ENCODE measurements at regions of chr3 and their contacts with region 1.

Region 1: DNA sequence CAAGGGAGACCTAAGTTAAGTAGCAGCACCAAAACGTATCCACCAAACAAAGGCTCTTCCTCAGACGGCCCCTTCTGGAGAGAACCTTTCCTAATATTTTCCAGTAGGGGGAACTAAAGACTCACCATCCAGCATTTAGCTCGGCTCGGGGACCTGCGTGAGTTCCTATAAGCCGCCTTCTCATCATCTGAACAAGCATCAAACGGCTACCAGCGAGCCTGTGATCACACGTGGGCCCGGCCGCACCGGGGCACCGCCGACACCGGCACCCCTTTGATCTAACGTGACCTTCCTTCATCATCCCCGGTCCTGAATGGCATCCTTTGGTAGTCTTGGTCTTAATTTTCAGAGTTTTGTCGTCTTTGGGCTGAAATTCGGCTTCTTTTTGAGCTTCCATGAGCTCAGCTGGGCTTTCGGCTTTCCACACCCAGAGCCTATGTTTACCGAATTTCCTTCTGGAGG is 1.4 kb upstream of the ROBO2 start:
- ATAC-seq: peak; percentile 61 to 76 (median 71)
- H3K4me3 ChIP-seq: peak overlapping the region; percentile 51 to 83 (median 66)
- H3K27ac ChIP-seq: peak overlapping the region in 1 of 2 donors; percentile 61
- H3K4me1 ChIP-seq: peaks cover 7 to 11% of the 10 kb centered on the region in 2 donors

Region 2: DNA sequence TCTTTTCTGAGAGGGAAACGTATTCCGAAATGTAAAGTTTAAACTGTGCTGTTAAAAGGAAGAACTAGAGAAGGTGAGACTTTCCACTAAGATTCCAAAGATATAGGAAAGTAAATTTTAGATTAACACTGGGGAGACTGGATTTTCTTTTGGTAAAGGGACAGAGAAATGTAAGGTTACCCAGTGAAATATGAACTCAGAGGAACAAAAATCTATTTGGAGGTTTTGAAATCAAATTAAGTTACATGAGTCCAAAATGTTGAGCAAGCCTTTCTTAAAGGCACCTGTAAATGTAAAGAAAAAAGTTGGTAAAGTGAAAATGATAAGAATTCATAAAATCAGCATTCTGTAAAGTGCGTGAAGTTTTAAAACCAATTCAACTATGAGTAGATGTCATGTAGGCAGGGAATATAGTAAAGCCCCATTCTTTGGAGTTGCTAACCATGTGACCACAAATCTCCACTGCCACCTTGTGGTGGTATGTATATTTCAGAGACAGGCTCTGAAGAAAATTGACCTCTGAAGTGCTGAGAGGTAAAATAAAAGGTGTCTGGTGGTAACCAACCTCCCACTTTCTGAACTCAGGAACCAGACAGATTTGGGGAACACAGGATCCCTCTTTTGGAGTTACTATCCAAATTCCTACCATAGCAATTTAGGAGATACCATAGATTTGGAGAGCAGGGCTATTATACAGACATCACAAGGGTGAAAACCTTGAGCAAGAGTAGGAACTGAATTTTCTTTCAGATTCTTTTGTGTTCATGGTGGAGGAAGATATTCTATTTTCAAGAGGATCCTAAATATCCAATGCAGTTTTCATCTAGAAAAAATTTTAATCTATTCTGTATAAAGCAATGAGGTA is 216.7 kb after region 1 on chr3:
- in situ Hi-C with region 1: loop called in 5 of 9 experiments (anchors 25 kb)
- ATAC-seq: peak in 6 of 8 experiments; percentile 51 to 74 (median 63)
- H3K4me3 ChIP-seq: no peak overlapping the region
- H3K27ac ChIP-seq: no peak overlapping the region
- H3K4me1 ChIP-seq: peaks cover 4 to 16% of the 10 kb centered on the region in 2 donors

Region 3: DNA sequence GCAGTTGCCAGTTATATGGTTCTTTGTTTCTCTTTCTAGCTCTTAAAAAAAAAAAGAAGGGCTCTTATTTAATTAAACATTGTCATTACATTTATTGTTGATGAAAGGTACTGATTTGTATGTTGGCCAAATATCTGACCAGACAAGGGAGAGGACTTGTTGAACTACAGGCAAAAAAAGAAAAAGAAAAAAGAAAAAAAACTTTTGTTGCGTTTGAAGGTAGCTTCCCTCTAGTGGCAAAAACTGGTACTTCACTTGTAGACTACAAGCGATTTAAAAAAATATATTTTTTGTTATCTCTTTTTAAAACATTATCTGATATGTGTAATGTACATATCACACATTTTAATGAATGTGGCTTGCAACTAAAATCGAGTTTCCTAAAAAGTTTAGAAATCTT is 282.0 kb after region 1 on chr3:
- in situ Hi-C with region 1: loop called in 1 of 9 experiments (anchors 25 kb)
- ATAC-seq: no peak
- H3K4me3 ChIP-seq: no peak overlapping the region
- H3K27ac ChIP-seq: no peak overlapping the region
- H3K4me1 ChIP-seq: no peaks in the 10 kb centered on the region

Region 4: DNA sequence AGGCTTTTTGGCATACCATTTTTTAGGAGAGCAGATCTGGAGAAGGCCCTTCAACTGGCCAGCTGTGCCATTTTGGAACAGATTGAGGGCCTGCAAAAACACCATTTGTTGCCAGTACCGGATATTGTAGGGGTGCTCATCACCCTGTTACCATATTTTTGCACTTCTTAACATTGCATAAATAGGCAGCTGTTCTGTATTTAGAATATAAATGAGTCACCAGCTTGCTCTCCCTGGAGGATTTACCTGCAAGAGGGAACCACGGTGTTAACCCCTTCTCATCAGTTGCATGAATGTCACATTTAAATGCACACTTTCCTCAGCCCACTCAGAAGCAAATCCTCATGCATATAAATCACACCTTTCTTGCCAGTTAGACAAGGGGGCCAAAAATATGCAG is 437.0 kb after region 1 on chr3:
- in situ Hi-C with region 1: no loop called
- ATAC-seq: peak in 3 of 8 experiments; percentile 21 to 50 (median 39)
- H3K4me3 ChIP-seq: no peak overlapping the region
- H3K27ac ChIP-seq: no peak overlapping the region
- H3K4me1 ChIP-seq: peaks cover 8 to 13% of the 10 kb centered on the region in 2 donors

Region 5: DNA sequence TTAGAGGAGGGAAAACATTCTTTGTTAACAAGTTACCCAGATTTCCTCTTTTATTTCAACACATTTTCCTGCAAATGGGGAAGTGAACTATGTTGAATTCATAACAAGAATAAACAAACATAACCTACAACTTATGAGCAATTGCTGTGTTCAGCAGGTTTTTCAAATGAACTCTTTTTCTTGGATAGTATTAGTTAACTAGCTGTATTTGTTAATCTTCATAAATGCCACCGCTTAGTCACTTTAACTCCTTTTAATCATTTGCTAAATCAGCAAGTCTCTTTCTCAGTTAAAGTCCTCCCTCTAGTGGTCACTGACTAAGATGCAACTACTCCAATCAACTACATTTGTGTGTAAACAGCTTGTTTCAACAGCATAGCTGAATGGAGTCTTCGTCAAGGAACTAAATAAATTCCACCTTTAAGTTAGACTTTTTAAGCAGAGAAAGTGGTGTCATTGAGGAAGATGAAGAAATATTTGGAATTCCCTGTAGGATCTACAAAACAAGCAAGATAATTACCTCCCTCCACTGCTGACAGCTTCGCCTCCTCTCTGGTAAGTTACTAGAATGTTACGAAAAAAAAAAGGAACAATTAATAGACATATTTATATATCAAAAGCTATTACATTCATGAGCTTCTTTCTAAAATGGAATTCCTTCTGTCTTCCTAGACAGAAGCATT is 1607.3 kb after region 1 on chr3:
- in situ Hi-C with region 1: loop called in 2 of 9 experiments (anchors 25 kb)
- ATAC-seq: peak; percentile 38 to 60 (median 54)
- H3K4me3 ChIP-seq: no peak overlapping the region
- H3K27ac ChIP-seq: no peak overlapping the region
- H3K4me1 ChIP-seq: peaks cover 15 to 37% of the 10 kb centered on the region in 2 donors

Region 6: DNA sequence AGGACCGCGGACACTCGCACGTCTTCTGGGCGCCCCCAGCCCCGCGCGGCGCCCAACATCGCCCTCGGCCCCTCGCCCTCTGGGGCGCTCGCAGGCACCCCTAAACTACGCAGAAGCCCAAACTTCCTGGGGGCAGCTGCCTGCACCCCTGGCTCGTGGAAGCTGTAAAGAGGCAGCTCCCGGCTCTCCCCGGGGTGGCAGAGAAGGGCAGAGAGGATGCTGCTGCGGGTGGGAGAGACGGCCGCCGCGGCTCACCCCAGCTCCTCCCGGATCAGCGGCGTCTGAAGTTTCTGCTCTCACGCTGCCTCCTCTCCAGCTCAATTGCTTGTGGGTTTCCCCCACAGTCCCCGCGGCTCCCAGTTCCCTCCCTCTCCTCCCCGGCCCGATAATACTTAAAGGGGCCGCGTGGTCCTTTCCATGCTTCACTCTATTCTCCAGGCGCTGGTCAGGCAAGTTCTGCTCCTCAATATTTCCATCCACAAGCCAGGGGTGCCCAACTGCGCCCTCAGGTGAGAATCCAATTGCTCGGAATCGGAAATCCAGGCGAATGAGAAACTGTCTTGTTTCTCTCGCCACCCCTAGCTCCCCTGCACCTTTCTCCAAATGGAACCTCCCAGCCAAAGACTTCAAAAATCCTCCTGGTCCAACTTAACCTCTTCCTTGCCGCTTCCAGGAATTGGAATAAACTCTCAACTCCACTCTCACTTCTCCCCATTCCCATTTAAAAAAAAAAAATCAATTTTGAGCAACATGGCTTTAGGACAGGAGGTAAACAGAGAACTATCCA is 1980.8 kb after region 1 on chr3:
- in situ Hi-C with region 1: loop called in 1 of 9 experiments (anchors 25 kb)
- ATAC-seq: peak; percentile 79 to 87 (median 82)
- H3K4me3 ChIP-seq: peak overlapping the region; percentile 69 to 93 (median 72)
- H3K27ac ChIP-seq: peak overlapping the region; percentile 94 to 96
- H3K4me1 ChIP-seq: peaks cover 5 to 25% of the 10 kb centered on the region in 2 donors